Sigmoid colon (tissue), 7 donors: ENCODE measurements at regions of chr17 and their contacts with region 1.

Region 1: GRCh38 chr17:77247048-77247541 is 106.3 kb downstream of the SEC14L1 start:
- DNase-seq: peak; percentile 91
- H3K4me3 ChIP-seq: peak overlapping the region; percentile 44 to 64 (median 58)
- H3K27ac ChIP-seq: peak overlapping the region in 2 of 4 donors; percentile 60 to 66
- H3K4me1 ChIP-seq: peaks cover 0 to 13% (median 12%) of the 10 kb centered on the region in 4 donors
- H3K27me3 ChIP-seq: peaks cover 0 to 7% (median 0%) of the 10 kb centered on the region in 3 donors
- CTCF ChIP-seq: peak; percentile 95 to 99 (median 98)
- EP300 ChIP-seq: no peak
- POLR2A ChIP-seq: no peak

Region 2: GRCh38 chr17:76868176-76868668 is 378.9 kb before region 1 on chr17 and contains the start of gene MGAT5B:
- intact Hi-C with region 1: loop called (anchors 2 kb)
- DNase-seq: peak; percentile 83
- H3K4me3 ChIP-seq: peak within 1 kb of the TSS in 3 of 4 donors; percentile 34 to 44 (median 43)
- H3K27ac ChIP-seq: no peak within 1 kb of the TSS
- H3K4me1 ChIP-seq: peaks cover 0 to 26% (median 22%) of the 10 kb centered on the region in 4 donors
- H3K27me3 ChIP-seq: peaks cover 25 to 79% (median 54%) of the 10 kb centered on the region in 3 donors
- CTCF ChIP-seq: peak; percentile 14 to 85 (median 28)
- EP300 ChIP-seq: no peak
- POLR2A ChIP-seq: no peak
- total RNA-seq, gene MGAT5B: 0.16 to 0.83 (median 0.49) TPM

Region 3: GRCh38 chr17:77086433-77087010 is 160.6 kb before region 1 on chr17:
- intact Hi-C with region 1: loop called (anchors 1 kb)
- DNase-seq: peak; percentile 91
- H3K4me3 ChIP-seq: no peak overlapping the region
- H3K27ac ChIP-seq: no peak overlapping the region
- H3K4me1 ChIP-seq: peaks cover 0 to 31% (median 25%) of the 10 kb centered on the region in 4 donors
- H3K27me3 ChIP-seq: no peaks in the 10 kb centered on the region
- CTCF ChIP-seq: peak; percentile 66 to 97 (median 88)
- EP300 ChIP-seq: no peak
- POLR2A ChIP-seq: no peak

Region 4: DNA sequence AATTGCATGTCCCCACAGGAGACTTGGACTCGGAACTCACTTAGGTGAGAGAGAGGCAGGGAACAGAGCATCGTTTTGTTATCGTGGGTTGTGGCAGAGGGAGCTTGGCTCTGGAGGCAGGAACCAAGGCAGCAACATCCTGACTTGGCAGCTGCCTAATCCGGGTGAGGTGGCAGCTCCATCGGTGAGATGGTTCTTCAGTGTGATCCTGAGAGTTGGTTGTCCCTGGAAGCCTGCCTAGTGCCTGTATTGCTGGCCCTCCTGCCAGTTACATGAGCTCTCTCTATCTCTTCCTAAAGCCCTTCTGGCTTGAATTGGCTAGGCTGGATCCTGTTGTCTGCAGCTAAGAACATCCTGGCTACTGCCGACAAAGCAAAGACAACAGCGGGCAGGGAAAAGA is 126.2 kb before region 1 on chr17:
- intact Hi-C with region 1: no loop called
- DNase-seq: no peak
- H3K4me3 ChIP-seq: no peak overlapping the region
- H3K27ac ChIP-seq: peak overlapping the region in 2 of 4 donors; percentile 42 to 54
- H3K4me1 ChIP-seq: peaks cover 0 to 19% (median 12%) of the 10 kb centered on the region in 4 donors
- H3K27me3 ChIP-seq: no peaks in the 10 kb centered on the region
- CTCF ChIP-seq: no peak
- EP300 ChIP-seq: no peak
- POLR2A ChIP-seq: no peak

Region 5: DNA sequence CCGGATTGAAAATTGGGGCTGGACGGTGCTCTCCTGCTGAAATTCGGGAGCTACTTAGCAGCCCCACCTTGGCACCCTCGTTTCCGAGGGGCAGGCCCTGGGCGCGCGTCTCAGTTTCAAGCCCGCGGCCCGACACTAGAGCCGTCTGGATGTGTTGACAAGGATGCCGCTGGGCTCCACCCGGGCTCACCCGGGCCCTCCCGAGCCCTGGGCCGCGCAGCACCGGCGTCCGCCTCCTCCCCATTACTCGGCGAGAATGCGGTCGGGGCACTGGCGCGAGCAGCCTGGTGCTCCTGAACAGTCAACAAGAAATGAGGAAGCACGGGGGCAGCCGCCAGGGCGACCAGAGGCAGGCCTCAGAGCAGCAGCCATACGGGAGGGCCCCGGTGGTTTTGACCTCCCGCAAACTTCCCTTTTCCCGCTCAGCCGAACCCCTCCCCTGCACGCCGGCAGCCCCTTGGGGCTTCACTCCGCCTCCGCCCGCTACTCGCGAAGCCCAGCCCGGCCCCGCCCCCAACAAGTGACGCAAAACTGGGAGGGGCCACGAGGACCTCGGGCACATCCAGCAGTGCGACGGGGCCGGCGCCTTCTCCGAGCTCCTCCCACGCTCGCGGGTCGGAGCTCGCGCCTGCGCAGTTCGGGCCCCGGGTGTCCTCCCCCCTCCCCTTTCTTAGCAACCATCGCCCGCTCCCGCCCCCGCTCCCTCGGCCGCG is 106.8 kb before region 1 on chr17:
- intact Hi-C with region 1: loop called (anchors 5 kb)
- DNase-seq: peak; percentile 100
- H3K4me3 ChIP-seq: peak overlapping the region; percentile 47 to 100 (median 98)
- H3K27ac ChIP-seq: peak overlapping the region; percentile 94 to 98 (median 96)
- H3K4me1 ChIP-seq: peaks cover 0 to 21% (median 17%) of the 10 kb centered on the region in 4 donors
- H3K27me3 ChIP-seq: no peaks in the 10 kb centered on the region
- CTCF ChIP-seq: no peak
- EP300 ChIP-seq: peak in 1 of 4 donors; percentile 35
- POLR2A ChIP-seq: peak; percentile 96 to 98

Region 6: DNA sequence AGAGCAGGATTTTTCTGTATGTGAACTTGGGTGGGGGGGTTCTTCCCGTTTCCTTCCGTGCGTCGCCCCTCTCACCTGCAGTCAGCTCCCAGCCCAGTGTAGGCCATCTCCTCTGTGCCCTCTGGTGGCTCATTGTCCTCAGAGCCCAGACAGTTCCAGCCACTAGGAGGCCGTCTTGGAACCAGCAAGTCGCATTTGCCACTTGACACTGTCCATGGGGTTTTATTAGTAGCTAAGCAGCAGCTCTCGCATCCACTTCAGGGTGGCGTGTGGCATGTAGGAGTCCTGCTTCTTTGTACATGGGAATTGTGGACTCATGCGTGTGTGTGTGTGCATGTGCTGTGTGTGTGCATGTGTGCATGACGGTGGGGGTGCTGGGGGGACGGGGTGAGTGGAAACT is 32.4 kb before region 1 on chr17:
- intact Hi-C with region 1: loop called (anchors 5 kb)
- DNase-seq: peak; percentile 51
- H3K4me3 ChIP-seq: no peak overlapping the region
- H3K27ac ChIP-seq: no peak overlapping the region
- H3K4me1 ChIP-seq: peaks cover 0 to 9% (median 1%) of the 10 kb centered on the region in 4 donors
- H3K27me3 ChIP-seq: no peaks in the 10 kb centered on the region
- CTCF ChIP-seq: peak in 3 of 4 experiments; percentile 13 to 43 (median 27)
- EP300 ChIP-seq: no peak
- POLR2A ChIP-seq: no peak

Region 7: GRCh38 chr17:77343031-77343800 is 96.1 kb after region 1 on chr17:
- intact Hi-C with region 1: no loop called
- DNase-seq: peak; percentile 43
- H3K4me3 ChIP-seq: no peak overlapping the region
- H3K27ac ChIP-seq: no peak overlapping the region
- H3K4me1 ChIP-seq: no peaks in the 10 kb centered on the region
- H3K27me3 ChIP-seq: no peaks in the 10 kb centered on the region
- CTCF ChIP-seq: no peak
- EP300 ChIP-seq: no peak
- POLR2A ChIP-seq: no peak

Region 8: GRCh38 chr17:77409282-77410161 is 162.4 kb after region 1 on chr17:
- intact Hi-C with region 1: no loop called
- DNase-seq: peak; percentile 97
- H3K4me3 ChIP-seq: peak overlapping the region; percentile 9 to 33 (median 27)
- H3K27ac ChIP-seq: peak overlapping the region; percentile 96 to 100 (median 98)
- H3K4me1 ChIP-seq: peaks cover 0 to 86% (median 80%) of the 10 kb centered on the region in 4 donors
- H3K27me3 ChIP-seq: no peaks in the 10 kb centered on the region
- CTCF ChIP-seq: no peak
- EP300 ChIP-seq: peak in 1 of 4 donors; percentile 89
- POLR2A ChIP-seq: peak; percentile 26 to 35